IMR-90 (cell line): ENCODE measurements at regions of chrX and their contacts with region 1.

Region 1: GRCh38 chrX:73916931-73917667 is 354.1 kb downstream of the CHIC1 start:
- DNase-seq: peak; percentile 91
- ATAC-seq: peak; percentile 83
- H3K4me3 ChIP-seq: no peak overlapping the region
- H3K27ac ChIP-seq: peak overlapping the region; percentile 72
- H3K4me1 ChIP-seq: peaks cover 14% of the 10 kb centered on the region
- H3K27me3 ChIP-seq: peaks cover 6% of the 10 kb centered on the region
- CTCF ChIP-seq: no peak
- POLR2A ChIP-seq: no peak
- RAD21 ChIP-seq: no peak

Region 2: GRCh38 chrX:73390628-73391567 is 526.2 kb before region 1 on chrX:
- CTCF ChIA-PET with region 1: no interaction called
- POLR2A ChIA-PET with region 1: no interaction called
- dilution Hi-C with region 1: no loop called
- in situ Hi-C with region 1: no loop called
- intact Hi-C with region 1: no loop called
- DNase-seq: no peak
- ATAC-seq: no peak
- H3K4me3 ChIP-seq: no peak overlapping the region
- H3K27ac ChIP-seq: no peak overlapping the region
- H3K4me1 ChIP-seq: no peaks in the 10 kb centered on the region
- H3K27me3 ChIP-seq: no peaks in the 10 kb centered on the region; the same call in 1 of the 2 replicates
- CTCF ChIP-seq: no peak
- POLR2A ChIP-seq: no peak
- RAD21 ChIP-seq: no peak

Region 3: GRCh38 chrX:73799888-73800287 is 117.2 kb before region 1 on chrX:
- CTCF ChIA-PET with region 1: no interaction called
- POLR2A ChIA-PET with region 1: no interaction called
- dilution Hi-C with region 1: no loop called
- in situ Hi-C with region 1: no loop called
- intact Hi-C with region 1: no loop called
- DNase-seq: no peak
- ATAC-seq: no peak
- H3K4me3 ChIP-seq: no peak overlapping the region
- H3K27ac ChIP-seq: no peak overlapping the region
- H3K4me1 ChIP-seq: no peaks in the 10 kb centered on the region
- H3K27me3 ChIP-seq: peaks cover 4% of the 10 kb centered on the region
- CTCF ChIP-seq: no peak
- POLR2A ChIP-seq: no peak
- RAD21 ChIP-seq: no peak

Region 4: DNA sequence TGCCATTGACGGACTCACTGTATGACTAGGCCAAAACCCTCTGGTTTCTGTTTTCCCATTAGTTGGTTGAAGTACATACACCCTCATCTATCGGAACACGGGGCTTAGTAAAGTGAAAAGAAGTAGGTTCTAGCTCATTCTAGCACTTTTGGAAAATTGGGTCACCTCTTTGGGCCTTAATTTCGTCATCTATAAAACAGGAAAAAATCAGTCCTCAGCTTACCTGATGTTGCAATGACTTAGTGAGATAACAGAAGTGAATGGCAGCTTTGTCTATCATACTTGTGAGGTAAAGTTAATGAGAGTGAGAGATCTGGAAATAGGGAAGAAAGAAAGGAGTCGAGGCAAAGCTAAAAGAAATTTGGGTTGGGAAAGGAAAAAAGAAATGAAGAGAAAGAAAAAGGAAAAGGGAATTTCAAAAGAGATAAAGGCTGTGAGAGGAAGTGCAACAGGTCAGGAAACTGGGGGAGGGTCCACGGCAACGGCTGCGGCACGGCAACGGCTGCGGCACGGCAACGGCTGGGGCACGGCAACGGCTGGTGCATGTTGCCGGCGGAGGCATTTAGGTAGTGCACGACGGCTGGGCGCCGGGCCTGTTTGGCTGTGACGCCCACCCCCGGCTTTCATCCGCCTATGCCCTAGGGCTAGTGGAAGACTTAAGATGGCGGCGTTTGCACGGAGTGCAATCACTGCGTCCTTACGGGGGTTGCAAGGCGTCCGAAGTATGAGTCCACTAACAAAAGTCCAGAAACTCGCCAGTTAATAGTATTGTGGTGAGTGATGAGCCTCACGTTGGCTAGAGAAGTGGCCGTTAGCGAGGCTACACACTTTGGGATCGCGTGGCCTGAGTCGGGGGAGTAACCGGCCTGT is 26.8 kb after region 1 on chrX:
- CTCF ChIA-PET with region 1: interaction called, 3 read pairs
- POLR2A ChIA-PET with region 1: no interaction called
- dilution Hi-C with region 1: no loop called
- in situ Hi-C with region 1: no loop called
- intact Hi-C with region 1: loop called (anchors 2 kb)
- DNase-seq: peak; percentile 91
- ATAC-seq: peak; percentile 100
- H3K4me3 ChIP-seq: peak overlapping the region; percentile 92
- H3K27ac ChIP-seq: peak overlapping the region; percentile 91
- H3K4me1 ChIP-seq: peaks cover 2% of the 10 kb centered on the region; the same call in 1 of the 2 replicates
- H3K27me3 ChIP-seq: no peaks in the 10 kb centered on the region
- CTCF ChIP-seq: no peak
- POLR2A ChIP-seq: peak; percentile 85
- RAD21 ChIP-seq: no peak